Dendritic cell treated with granulocyte-macrophage colony-stimulating factor and Interleukin-4, amounts not matched to agents 40 ng/mL and 50 ng/mL, for 4 days (primary cell): ENCODE measurements at regions of chr6 and their contacts with region 1.

Region 1: GRCh38 chr6:30483677-30484279 is 5.5 kb upstream of the HLA-E start:
- H3K4me3 Mint-ChIP-seq: no peak overlapping the region
- H3K27ac Mint-ChIP-seq: no peak overlapping the region
- H3K4me1 Mint-ChIP-seq: peaks cover 29% of the 10 kb centered on the region
- H3K27me3 Mint-ChIP-seq: peaks cover 49% of the 10 kb centered on the region

Region 2: GRCh38 chr6:28867086-28867673 is 1616.6 kb before region 1 on chr6:
- intact Hi-C with region 1: no loop called
- H3K4me3 Mint-ChIP-seq: peak overlapping the region; percentile 82
- H3K27ac Mint-ChIP-seq: peak overlapping the region; percentile 93
- H3K4me1 Mint-ChIP-seq: peaks cover 27% of the 10 kb centered on the region
- H3K27me3 Mint-ChIP-seq: peaks cover 20% of the 10 kb centered on the region

Region 3: GRCh38 chr6:30541515-30542403 is 58.0 kb after region 1 on chr6:
- intact Hi-C with region 1: loop called (anchors 2 kb)
- H3K4me3 Mint-ChIP-seq: peak overlapping the region; percentile 67
- H3K27ac Mint-ChIP-seq: no peak overlapping the region
- H3K4me1 Mint-ChIP-seq: peaks cover 23% of the 10 kb centered on the region
- H3K27me3 Mint-ChIP-seq: peaks cover 20% of the 10 kb centered on the region

Region 4: DNA sequence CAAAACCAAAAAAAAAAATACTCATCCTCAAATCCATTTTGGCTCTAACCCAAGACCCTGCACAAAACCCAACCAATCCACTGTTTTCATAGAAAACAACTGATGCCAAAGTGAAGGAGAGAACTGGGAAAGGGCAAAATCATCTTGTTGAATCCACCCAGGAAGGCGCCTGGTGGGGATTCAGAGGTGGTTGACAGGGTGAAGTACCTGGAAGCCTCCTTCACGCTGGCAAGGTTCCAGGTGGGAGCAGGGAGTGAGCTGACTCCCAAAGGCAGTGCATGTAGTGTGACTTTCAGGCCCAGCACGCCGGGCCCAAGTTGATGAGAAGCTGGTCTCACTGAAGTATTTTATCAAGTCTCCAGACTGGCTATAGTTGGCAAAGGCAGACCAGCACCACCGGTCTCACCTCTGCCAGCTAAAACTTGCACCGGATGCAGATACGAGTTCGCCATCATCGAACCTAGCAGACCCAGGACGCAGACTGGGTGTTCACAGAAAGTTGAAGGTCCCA is 116.7 kb after region 1 on chr6:
- intact Hi-C with region 1: loop called (anchors 1 kb)
- H3K4me3 Mint-ChIP-seq: no peak overlapping the region
- H3K27ac Mint-ChIP-seq: no peak overlapping the region
- H3K4me1 Mint-ChIP-seq: peaks cover 21% of the 10 kb centered on the region
- H3K27me3 Mint-ChIP-seq: no peaks in the 10 kb centered on the region

Region 5: GRCh38 chr6:30672445-30673253 is 188.9 kb after region 1 on chr6 and contains the start of gene DHX16:
- intact Hi-C with region 1: loop called (anchors 2 kb)
- H3K4me3 Mint-ChIP-seq: peak within 1 kb of the TSS; percentile 89
- H3K27ac Mint-ChIP-seq: peak within 1 kb of the TSS; percentile 80
- H3K4me1 Mint-ChIP-seq: peaks cover 46% of the 10 kb centered on the region
- H3K27me3 Mint-ChIP-seq: no peaks in the 10 kb centered on the region